ENCODE measurements at regions of chr6 and their contacts with region 1.

Region 1: GRCh38 chr6:14857501-14857900 is 388.4 kb upstream of the JARID2 start:
- DNase-seq: peak; percentile 46
- ATAC-seq: peak; percentile 97
- H3K4me3 Mint-ChIP-seq: peak overlapping the region; percentile 78
- H3K27ac Mint-ChIP-seq: peak overlapping the region; percentile 91
- H3K4me1 Mint-ChIP-seq: peaks cover 15% of the 10 kb centered on the region
- H3K27me3 Mint-ChIP-seq: no peaks in the 10 kb centered on the region
- CTCF ChIP-seq: no peak

Region 2: DNA sequence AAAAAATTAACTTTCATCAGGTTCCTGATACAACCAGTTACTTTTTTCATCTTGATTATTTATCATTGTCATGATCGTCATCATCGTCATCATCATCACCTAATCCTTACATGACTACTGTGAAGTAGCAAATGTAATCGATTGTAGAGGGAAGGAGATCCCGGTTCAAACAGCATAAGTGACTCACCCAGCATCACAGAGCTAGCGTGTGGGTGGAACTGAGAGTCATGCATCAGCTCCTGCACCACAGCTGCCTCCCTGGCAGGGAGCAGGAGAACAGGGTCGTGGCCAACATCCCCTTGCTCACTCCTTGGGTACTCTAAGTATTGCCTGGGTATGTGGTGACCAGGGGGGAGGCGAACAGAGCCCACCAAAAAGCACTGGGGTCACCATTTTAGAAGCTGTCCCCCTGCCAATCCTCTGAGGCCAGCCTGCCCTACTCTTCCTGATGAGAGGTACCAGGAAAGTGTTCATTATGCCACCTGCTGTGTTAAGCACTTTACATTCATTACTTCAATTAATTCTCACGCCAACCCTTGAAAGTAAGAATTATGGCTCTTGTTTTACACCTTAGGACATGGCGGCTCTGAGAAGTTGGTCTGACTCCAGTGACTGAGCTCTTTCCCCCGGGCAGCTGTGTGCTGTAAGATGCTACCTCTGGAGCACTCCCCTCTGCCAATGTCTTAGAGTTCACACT is 314.7 kb before region 1 on chr6:
- CTCF ChIA-PET with region 1: no interaction called
- POLR2A ChIA-PET with region 1: no interaction called
- intact Hi-C with region 1: loop called (anchors 5 kb)
- DNase-seq: peak; percentile 23
- ATAC-seq: peak; percentile 98
- H3K4me3 Mint-ChIP-seq: peak overlapping the region; percentile 6
- H3K27ac Mint-ChIP-seq: peak overlapping the region; percentile 21
- H3K4me1 Mint-ChIP-seq: peaks cover 34% of the 10 kb centered on the region
- H3K27me3 Mint-ChIP-seq: no peaks in the 10 kb centered on the region
- CTCF ChIP-seq: no peak

Region 3: GRCh38 chr6:15048367-15048766 is 190.9 kb after region 1 on chr6:
- CTCF ChIA-PET with region 1: no interaction called
- POLR2A ChIA-PET with region 1: interaction called, 17 read pairs
- intact Hi-C with region 1: no loop called
- DNase-seq: no peak
- ATAC-seq: peak; percentile 65
- H3K4me3 Mint-ChIP-seq: peak overlapping the region; percentile 5
- H3K27ac Mint-ChIP-seq: peak overlapping the region; percentile 5
- H3K4me1 Mint-ChIP-seq: peaks cover 14% of the 10 kb centered on the region
- H3K27me3 Mint-ChIP-seq: no peaks in the 10 kb centered on the region
- CTCF ChIP-seq: no peak

Region 4: DNA sequence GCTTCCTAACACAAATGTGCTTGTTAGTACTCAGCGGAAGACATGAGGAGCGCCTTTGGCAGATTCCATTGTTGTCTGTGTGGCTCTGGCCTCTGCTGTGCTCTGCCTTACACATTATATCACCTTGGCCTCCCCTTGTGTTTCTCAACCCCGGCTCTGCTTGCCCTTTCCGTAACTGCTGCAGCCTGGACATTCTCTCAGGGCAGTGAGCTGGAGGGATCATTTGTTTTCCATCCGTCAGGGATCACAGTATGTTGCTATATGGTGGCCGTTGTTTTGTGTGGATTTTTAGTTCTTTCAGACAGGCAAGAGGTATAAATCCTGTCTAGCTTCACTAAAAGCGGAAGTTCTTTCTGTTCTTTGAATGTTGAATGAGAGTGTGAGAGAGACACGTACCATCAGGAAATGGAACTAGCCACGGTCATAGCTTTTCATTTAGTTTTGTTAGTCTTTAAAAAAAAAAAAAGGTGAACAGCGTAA is 563.5 kb after region 1 on chr6:
- CTCF ChIA-PET with region 1: no interaction called
- POLR2A ChIA-PET with region 1: interaction called, 15 read pairs
- intact Hi-C with region 1: no loop called
- DNase-seq: peak; percentile 31
- ATAC-seq: peak; percentile 91
- H3K4me3 Mint-ChIP-seq: peak overlapping the region; percentile 30
- H3K27ac Mint-ChIP-seq: peak overlapping the region; percentile 86
- H3K4me1 Mint-ChIP-seq: peaks cover 55% of the 10 kb centered on the region
- H3K27me3 Mint-ChIP-seq: no peaks in the 10 kb centered on the region
- CTCF ChIP-seq: no peak